ENCODE measurements at regions of chr12 and their contacts with region 1.

Region 1: DNA sequence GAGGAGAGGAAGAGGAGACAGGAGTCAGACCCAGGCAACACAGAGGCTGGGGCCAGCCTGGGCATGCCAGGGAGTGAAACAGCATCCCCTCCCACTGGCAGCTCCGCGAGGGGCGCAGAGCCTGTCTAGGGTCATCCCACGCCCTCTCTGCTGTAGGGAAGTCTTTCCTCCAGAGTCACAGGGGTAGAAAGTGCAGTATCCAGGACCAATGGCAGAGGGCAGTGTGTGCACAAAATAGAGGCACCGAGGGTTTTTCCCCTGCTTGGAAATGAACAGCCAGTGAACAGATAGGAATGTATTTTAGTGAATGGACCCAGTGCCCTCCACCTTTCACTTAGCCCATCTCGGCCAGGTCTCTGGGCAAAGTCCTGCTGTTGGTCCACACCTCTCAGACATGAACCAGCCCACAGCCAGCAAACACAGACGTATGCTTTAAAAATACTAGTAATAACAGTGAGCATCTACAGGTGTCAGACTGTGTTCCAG is 9.4 kb upstream of the KRT74 start:
- DNase-seq: peak; percentile 76
- ATAC-seq: peak; percentile 65
- H3K4me3 Mint-ChIP-seq: no peak overlapping the region
- H3K27ac Mint-ChIP-seq: no peak overlapping the region
- H3K4me1 Mint-ChIP-seq: peaks cover 34% of the 10 kb centered on the region
- H3K27me3 Mint-ChIP-seq: peaks cover 2% of the 10 kb centered on the region

Region 2: GRCh38 chr12:52442600-52443061 is 140.4 kb before region 1 on chr12:
- CTCF ChIA-PET with region 1: no interaction called
- POLR2A ChIA-PET with region 1: no interaction called
- DNase-seq: no peak
- ATAC-seq: no peak
- H3K4me3 Mint-ChIP-seq: no peak overlapping the region
- H3K27ac Mint-ChIP-seq: no peak overlapping the region
- H3K4me1 Mint-ChIP-seq: peaks cover 5% of the 10 kb centered on the region
- H3K27me3 Mint-ChIP-seq: peaks cover 32% of the 10 kb centered on the region

Region 3: GRCh38 chr12:52539083-52539820 is 43.8 kb before region 1 on chr12:
- CTCF ChIA-PET with region 1: no interaction called
- POLR2A ChIA-PET with region 1: no interaction called
- DNase-seq: no peak
- ATAC-seq: no peak
- H3K4me3 Mint-ChIP-seq: no peak overlapping the region
- H3K27ac Mint-ChIP-seq: no peak overlapping the region
- H3K4me1 Mint-ChIP-seq: peaks cover 9% of the 10 kb centered on the region
- H3K27me3 Mint-ChIP-seq: peaks cover 3% of the 10 kb centered on the region

Region 4: GRCh38 chr12:52598966-52599365 is 16.0 kb after region 1 on chr12:
- CTCF ChIA-PET with region 1: interaction called, 11 read pairs
- POLR2A ChIA-PET with region 1: no interaction called
- DNase-seq: no peak
- ATAC-seq: no peak
- H3K4me3 Mint-ChIP-seq: no peak overlapping the region
- H3K27ac Mint-ChIP-seq: no peak overlapping the region
- H3K4me1 Mint-ChIP-seq: peaks cover 8% of the 10 kb centered on the region
- H3K27me3 Mint-ChIP-seq: peaks cover 33% of the 10 kb centered on the region

Region 5: DNA sequence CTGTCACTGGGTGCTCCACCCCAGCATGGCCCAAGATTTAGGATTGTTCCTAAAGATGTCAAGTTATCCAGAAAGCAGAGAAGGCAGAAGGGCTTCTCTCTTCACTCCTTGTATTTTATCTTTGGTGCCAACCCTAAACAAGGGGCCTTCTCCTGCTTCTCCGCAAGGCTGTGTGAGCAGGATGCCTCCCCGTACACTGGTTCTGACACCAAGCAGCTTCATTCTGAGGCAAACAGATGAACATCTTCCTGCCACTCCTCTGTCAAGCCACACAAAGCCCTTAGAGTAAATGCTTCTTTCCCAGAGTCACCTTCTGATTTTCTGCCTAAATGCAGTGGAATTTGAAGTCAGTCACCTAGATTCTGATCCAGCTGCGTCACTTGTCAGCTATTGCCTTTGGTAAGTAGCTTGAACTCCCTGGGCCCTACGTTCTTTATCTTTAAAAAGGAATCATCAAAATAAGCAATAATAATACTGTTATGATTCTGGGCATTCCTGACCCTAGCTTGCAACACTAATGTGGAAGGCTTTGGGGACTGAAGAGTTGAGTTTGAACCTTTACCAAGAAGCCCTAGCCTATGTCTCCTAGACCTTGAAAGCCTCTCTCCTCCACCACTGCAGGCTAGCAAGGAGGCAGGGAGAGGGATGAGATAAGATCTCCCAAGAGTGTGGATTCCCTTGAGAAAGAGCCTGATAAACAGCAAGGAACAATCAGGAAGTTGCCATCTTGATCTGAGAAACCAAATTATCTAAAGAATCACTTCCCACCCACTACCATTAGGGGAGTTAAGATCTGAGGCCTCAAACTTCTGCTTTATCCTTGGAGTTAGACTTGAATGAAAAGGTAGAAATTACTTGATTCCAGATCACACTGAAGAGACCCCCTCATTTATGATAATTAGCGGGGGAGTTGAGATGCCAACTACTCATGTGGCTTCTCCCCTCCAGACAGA is 29.7 kb after region 1 on chr12:
- CTCF ChIA-PET with region 1: interaction called, 31 read pairs
- POLR2A ChIA-PET with region 1: no interaction called
- DNase-seq: no peak
- ATAC-seq: no peak
- H3K4me3 Mint-ChIP-seq: no peak overlapping the region
- H3K27ac Mint-ChIP-seq: peak overlapping the region; percentile 58
- H3K4me1 Mint-ChIP-seq: peaks cover 75% of the 10 kb centered on the region
- H3K27me3 Mint-ChIP-seq: peaks cover 6% of the 10 kb centered on the region

Region 6: GRCh38 chr12:52634266-52635056 is 51.4 kb after region 1 on chr12:
- CTCF ChIA-PET with region 1: interaction called, 23 read pairs
- POLR2A ChIA-PET with region 1: no interaction called
- DNase-seq: peak; percentile 17
- ATAC-seq: no peak
- H3K4me3 Mint-ChIP-seq: no peak overlapping the region
- H3K27ac Mint-ChIP-seq: peak overlapping the region; percentile 17
- H3K4me1 Mint-ChIP-seq: peaks cover 67% of the 10 kb centered on the region
- H3K27me3 Mint-ChIP-seq: peaks cover 5% of the 10 kb centered on the region

Region 7: GRCh38 chr12:52645120-52645761 is 62.2 kb after region 1 on chr12:
- CTCF ChIA-PET with region 1: interaction called, 12 read pairs
- POLR2A ChIA-PET with region 1: interaction called, 3 read pairs
- DNase-seq: peak; percentile 87
- ATAC-seq: peak; percentile 91
- H3K4me3 Mint-ChIP-seq: peak overlapping the region; percentile 50
- H3K27ac Mint-ChIP-seq: peak overlapping the region; percentile 99
- H3K4me1 Mint-ChIP-seq: peaks cover 73% of the 10 kb centered on the region
- H3K27me3 Mint-ChIP-seq: peaks cover 3% of the 10 kb centered on the region

Region 8: GRCh38 chr12:52681526-52682380 is 98.7 kb after region 1 on chr12:
- CTCF ChIA-PET with region 1: interaction called, 13 read pairs
- POLR2A ChIA-PET with region 1: interaction called, 3 read pairs
- DNase-seq: peak; percentile 71
- ATAC-seq: peak; percentile 94
- H3K4me3 Mint-ChIP-seq: no peak overlapping the region
- H3K27ac Mint-ChIP-seq: no peak overlapping the region
- H3K4me1 Mint-ChIP-seq: peaks cover 25% of the 10 kb centered on the region
- H3K27me3 Mint-ChIP-seq: peaks cover 36% of the 10 kb centered on the region

Region 9: GRCh38 chr12:53379389-53380103 is 796.5 kb after region 1 on chr12:
- CTCF ChIA-PET with region 1: no interaction called
- POLR2A ChIA-PET with region 1: no interaction called
- DNase-seq: peak; percentile 99
- ATAC-seq: peak; percentile 80
- H3K4me3 Mint-ChIP-seq: no peak overlapping the region
- H3K27ac Mint-ChIP-seq: no peak overlapping the region
- H3K4me1 Mint-ChIP-seq: peaks cover 35% of the 10 kb centered on the region
- H3K27me3 Mint-ChIP-seq: no peaks in the 10 kb centered on the region

Measured in activated CD8-positive, alpha-beta T cell treated with anti-CD3 and anti-CD28 coated beads, Interleukin-2, amount 10 ng/mL, durations not matched to agents 7 days and 5 days (primary cell).